ENCODE measurements at regions of chr3 and their contacts with region 1.

Region 1: DNA sequence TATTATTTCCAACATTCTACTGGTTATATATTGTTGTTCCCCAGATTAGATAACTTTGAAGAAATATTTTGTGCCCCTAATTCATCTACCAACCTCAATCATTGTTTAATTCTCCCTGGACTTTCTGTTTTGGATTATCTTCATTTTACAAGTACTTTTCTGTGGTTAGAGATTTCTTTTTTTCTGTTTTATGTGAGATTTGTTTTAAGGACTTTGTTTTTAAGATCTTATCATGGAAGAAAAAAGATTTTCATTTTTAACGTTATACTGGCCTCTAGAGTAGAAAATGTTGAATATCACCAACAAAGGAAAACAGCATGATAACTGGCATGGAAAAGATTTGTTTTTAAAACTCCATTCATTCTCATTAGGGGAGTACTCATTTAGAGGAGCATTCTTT is 210.9 kb upstream of the KCNMB2 start:
- DNase-seq: no peak
- ATAC-seq: no peak
- H3K4me3 ChIP-seq: no peak overlapping the region
- H3K27ac ChIP-seq: peak overlapping the region in 5 of 12 donors; percentile 14 to 41 (median 32)
- H3K4me1 ChIP-seq: peaks cover 0 to 32% (median 19%) of the 10 kb centered on the region in 12 donors
- H3K27me3 ChIP-seq: no peaks in the 10 kb centered on the region
- CTCF ChIP-seq: peak; percentile 18 to 66 (median 48)
- POLR2A ChIP-seq: no peak

Region 2: GRCh38 chr3:177050501-177051237 is 1274.7 kb before region 1 on chr3:
- intact Hi-C with region 1: loop called in 8 of 10 experiments (anchors 5 to 10 kb)
- DNase-seq: no peak
- ATAC-seq: peak; percentile 53 to 74 (median 60)
- H3K4me3 ChIP-seq: no peak overlapping the region
- H3K27ac ChIP-seq: no peak overlapping the region
- H3K4me1 ChIP-seq: peaks cover 0 to 22% (median 14%) of the 10 kb centered on the region in 12 donors
- H3K27me3 ChIP-seq: no peaks in the 10 kb centered on the region
- CTCF ChIP-seq: peak; percentile 35 to 73 (median 63)
- POLR2A ChIP-seq: no peak

Region 3: DNA sequence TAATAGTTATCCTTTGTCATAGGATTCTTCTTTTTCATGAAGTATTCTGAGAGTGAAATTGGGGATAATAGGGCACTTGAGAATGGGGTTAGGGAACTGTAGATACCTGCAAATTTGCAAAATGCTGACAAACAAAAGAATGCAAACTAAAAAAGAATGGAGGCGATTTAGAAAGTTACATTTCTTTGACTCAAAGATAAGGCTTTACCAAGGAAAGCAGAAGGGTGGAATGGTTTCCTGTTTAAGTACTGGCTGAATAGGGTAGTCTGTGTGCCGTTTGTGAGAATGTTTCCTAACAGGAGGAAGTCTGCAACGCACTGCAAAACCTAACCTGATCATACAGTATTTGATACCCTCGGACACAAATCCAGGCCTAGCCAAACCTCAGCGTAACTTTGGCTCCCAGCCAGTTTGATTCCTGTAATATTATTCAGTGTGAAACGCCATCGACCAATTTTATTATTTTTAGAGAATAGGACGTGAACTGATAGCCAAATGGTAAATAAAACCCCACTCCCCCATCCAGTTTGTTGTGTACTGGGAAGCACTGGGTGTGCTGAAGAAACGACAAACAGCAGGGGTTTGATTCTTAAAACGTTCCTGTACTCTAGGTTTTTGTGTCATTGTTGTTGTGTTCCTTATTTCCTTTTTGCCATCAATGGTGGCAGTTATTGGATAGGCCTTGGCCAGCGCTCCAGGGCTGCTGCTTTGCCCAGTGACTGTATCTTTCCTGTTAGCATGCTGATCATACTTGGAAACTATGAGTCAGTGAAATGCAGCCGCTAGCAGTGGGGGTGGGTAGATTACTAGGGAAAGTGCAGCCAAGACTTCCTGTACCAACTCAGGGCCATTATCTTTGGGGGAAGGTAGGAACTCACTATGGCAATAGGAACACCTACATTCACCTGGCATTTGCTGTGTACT is 980.0 kb before region 1 on chr3:
- intact Hi-C with region 1: loop called in 1 of 10 experiments (anchors 10 kb)
- DNase-seq: peak; percentile 88 to 94 (median 88)
- ATAC-seq: peak; percentile 97 to 99 (median 98)
- H3K4me3 ChIP-seq: peak overlapping the region in 1 of 12 donors; percentile 9
- H3K27ac ChIP-seq: peak overlapping the region; percentile 79 to 98 (median 92)
- H3K4me1 ChIP-seq: peaks cover 16 to 68% (median 47%) of the 10 kb centered on the region in 12 donors
- H3K27me3 ChIP-seq: no peaks in the 10 kb centered on the region
- CTCF ChIP-seq: no peak
- POLR2A ChIP-seq: no peak

Region 4: GRCh38 chr3:177777699-177778098 is 547.6 kb before region 1 on chr3:
- intact Hi-C with region 1: loop called in 2 of 10 experiments (anchors 2 to 5 kb)
- DNase-seq: peak in 4 of 5 donors; percentile 25 to 52 (median 36)
- ATAC-seq: peak in 2 of 4 donors; percentile 26 to 47
- H3K4me3 ChIP-seq: no peak overlapping the region
- H3K27ac ChIP-seq: no peak overlapping the region
- H3K4me1 ChIP-seq: peaks cover 0 to 67% (median 29%) of the 10 kb centered on the region in 12 donors
- H3K27me3 ChIP-seq: no peaks in the 10 kb centered on the region
- CTCF ChIP-seq: peak; percentile 37 to 65 (median 54)
- POLR2A ChIP-seq: no peak

Region 5: GRCh38 chr3:177827511-177828207 is 497.7 kb before region 1 on chr3:
- intact Hi-C with region 1: loop called in 1 of 10 experiments (anchors 10 kb)
- DNase-seq: no peak
- ATAC-seq: no peak
- H3K4me3 ChIP-seq: no peak overlapping the region
- H3K27ac ChIP-seq: peak overlapping the region in 1 of 12 donors; percentile 53
- H3K4me1 ChIP-seq: peaks cover 0 to 42% (median 27%) of the 10 kb centered on the region in 12 donors
- H3K27me3 ChIP-seq: no peaks in the 10 kb centered on the region
- CTCF ChIP-seq: no peak
- POLR2A ChIP-seq: no peak

Region 6: GRCh38 chr3:178001670-178002101 is 323.6 kb before region 1 on chr3:
- intact Hi-C with region 1: no loop called
- DNase-seq: no peak
- ATAC-seq: peak in 2 of 4 donors; percentile 22 to 69
- H3K4me3 ChIP-seq: no peak overlapping the region
- H3K27ac ChIP-seq: peak overlapping the region in 1 of 12 donors; percentile 54
- H3K4me1 ChIP-seq: peaks cover 0 to 23% (median 0%) of the 10 kb centered on the region in 12 donors
- H3K27me3 ChIP-seq: no peaks in the 10 kb centered on the region
- CTCF ChIP-seq: no peak
- POLR2A ChIP-seq: no peak

Region 7: DNA sequence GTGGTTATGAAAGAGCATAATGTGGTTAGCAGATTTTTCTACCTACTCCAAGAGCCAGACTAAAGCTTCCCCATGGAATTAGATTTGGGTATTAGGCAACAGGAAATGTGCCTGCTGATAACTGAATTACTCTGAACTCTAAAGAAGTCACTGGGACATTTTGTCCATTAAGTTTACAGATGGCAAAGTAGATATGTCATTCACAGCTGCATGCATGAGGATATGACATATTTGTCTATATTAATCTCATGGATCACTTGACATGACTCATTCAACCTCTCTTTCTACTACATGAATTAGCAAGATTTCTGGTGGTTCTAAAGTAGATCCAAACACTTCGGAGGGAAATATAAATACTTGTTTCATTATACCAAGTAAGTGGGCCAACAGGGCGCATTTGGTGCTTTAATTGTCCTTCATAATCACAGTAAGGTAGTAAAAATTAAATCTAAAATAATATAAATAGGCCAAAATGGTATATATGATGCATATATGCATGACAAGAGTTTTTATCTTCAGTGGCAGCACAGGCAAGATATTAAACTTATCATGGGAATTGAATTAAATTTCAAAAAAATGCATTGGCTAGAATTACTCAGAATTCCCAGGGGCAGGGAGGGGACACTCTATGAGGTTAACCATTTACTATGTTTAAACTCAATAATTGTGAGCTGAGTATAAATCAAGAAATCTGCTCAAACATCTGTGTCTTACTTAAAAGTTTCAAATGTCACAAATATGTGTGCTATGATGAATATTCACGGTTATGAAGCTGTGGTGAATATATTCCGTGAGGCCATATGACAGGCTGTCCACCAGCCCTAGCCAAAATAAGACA is 154.4 kb before region 1 on chr3:
- intact Hi-C with region 1: loop called in 1 of 10 experiments (anchors 5 kb)
- DNase-seq: peak in 1 of 5 donors; percentile 12
- ATAC-seq: peak; percentile 86 to 95 (median 94)
- H3K4me3 ChIP-seq: no peak overlapping the region
- H3K27ac ChIP-seq: peak overlapping the region in 10 of 12 donors; percentile 12 to 78 (median 40)
- H3K4me1 ChIP-seq: peaks cover 3 to 24% (median 13%) of the 10 kb centered on the region in 12 donors
- H3K27me3 ChIP-seq: no peaks in the 10 kb centered on the region
- CTCF ChIP-seq: no peak
- POLR2A ChIP-seq: no peak

Region 8: DNA sequence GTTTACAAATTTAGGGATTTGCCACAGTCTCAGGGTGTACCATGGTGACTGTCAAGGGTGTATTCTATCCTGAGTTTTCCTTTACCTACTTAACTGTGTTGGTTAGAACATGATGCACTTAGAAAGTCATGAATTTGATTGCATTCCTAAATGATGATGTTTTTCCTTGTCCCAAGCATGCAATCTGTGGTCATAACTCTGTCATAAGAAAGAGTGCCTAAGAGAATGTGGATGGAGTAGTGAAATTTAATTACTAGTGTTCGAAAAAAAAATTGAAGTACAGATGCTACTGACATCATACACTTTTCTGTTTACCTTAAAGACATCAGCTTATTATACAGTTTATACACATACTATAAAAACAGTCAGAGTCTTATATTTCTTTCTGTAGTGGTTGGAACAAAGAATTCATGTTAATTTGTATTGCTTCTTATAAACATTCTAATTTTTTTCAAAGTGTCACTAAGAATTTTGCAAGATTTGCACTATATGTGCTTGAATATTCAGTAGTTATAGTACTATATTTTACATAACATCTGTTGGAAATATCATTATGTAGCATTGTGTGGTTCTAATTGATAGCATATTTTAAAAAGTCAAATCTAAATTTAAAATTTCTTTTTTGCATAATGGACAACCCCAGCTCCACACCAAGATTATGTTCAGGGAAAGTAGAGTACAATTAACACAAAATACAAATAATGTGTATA is 20.4 kb before region 1 on chr3:
- intact Hi-C with region 1: no loop called
- DNase-seq: no peak
- ATAC-seq: no peak
- H3K4me3 ChIP-seq: no peak overlapping the region
- H3K27ac ChIP-seq: no peak overlapping the region
- H3K4me1 ChIP-seq: no peaks in the 10 kb centered on the region
- H3K27me3 ChIP-seq: no peaks in the 10 kb centered on the region
- CTCF ChIP-seq: no peak
- POLR2A ChIP-seq: no peak

Region 9: DNA sequence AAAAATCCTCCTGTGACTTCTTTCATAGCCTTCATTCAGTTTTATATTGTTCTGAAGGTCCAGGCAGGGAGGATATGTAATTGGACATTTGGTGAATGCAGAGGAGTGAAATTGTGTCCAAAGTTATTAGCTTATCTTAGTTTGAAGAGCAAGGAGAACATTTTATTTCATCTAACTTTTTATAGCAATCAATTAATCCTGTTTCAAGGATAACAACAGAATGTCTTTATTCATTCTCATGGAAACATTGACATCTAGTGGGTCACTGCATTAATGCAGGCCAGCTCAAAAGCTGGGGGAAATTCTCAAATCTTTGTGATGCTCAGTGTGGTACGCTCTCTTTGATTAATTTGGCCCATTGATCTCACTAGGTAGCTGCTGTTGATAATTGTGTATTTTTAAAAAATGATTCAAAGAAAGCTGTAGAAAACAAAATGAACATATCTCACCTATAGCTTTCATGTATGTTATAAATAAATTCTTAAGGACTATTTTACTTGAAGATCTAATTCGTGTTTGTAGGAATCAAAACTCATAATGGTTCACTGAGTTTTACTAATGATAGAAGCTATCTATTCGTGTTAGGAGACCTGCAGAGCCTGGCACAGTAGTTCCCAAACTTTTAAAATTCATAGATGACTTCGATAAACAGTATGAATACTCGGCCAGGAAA is 60.1 kb after region 1 on chr3:
- intact Hi-C with region 1: loop called in 1 of 10 experiments (anchors 5 kb)
- DNase-seq: no peak
- ATAC-seq: peak in 3 of 4 donors; percentile 64 to 74 (median 72)
- H3K4me3 ChIP-seq: peak overlapping the region in 6 of 12 donors; percentile 1 to 34 (median 6)
- H3K27ac ChIP-seq: peak overlapping the region in 8 of 12 donors; percentile 20 to 75 (median 56)
- H3K4me1 ChIP-seq: peaks cover 0 to 41% (median 22%) of the 10 kb centered on the region in 12 donors
- H3K27me3 ChIP-seq: no peaks in the 10 kb centered on the region
- CTCF ChIP-seq: peak; percentile 64 to 94 (median 84)
- POLR2A ChIP-seq: no peak

Measured in heart left ventricle (tissue), 16 donors.